ENCODE measurements at regions of chr1 and their contacts with region 1.

Region 1: GRCh38 chr1:1906185-1907097 is 8.6 kb upstream of the CALML6 start:
- DNase-seq: peak; percentile 82
- ATAC-seq: peak; percentile 50
- H3K4me3 Mint-ChIP-seq: no peak overlapping the region
- H3K27ac Mint-ChIP-seq: peak overlapping the region; percentile 21
- H3K4me1 Mint-ChIP-seq: peaks cover 15% of the 10 kb centered on the region
- H3K27me3 Mint-ChIP-seq: no peaks in the 10 kb centered on the region

Region 2: GRCh38 chr1:1777950-1778662 is 128.3 kb before region 1 on chr1 and contains the start of gene NADK:
- CTCF ChIA-PET with region 1: interaction called, 27 read pairs
- DNase-seq: peak; percentile 75
- ATAC-seq: peak; percentile 71
- H3K4me3 Mint-ChIP-seq: peak within 1 kb of the TSS; percentile 79
- H3K27ac Mint-ChIP-seq: peak within 1 kb of the TSS; percentile 98
- H3K4me1 Mint-ChIP-seq: peaks cover 67% of the 10 kb centered on the region
- H3K27me3 Mint-ChIP-seq: no peaks in the 10 kb centered on the region
- total RNA-seq, gene NADK: 97.9 to 100 TPM

Region 3: DNA sequence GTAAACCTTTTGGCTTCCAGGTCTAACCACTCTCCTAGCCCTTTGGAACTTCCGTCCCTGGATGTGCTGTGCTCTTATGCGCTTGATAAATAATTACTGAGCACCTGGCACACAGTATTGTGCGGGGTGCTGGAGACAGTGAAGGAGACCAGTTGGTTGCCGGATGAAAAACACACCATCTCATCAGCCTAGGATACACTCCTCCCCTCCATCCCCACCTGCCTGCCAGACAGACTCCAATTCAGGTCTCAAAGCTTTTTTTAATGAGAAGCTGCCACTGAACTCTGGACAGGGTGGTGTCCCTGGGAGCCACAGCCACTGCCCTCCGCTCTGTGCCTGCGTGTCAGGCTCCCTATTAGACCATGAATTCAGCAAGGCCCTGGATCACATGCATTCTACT is 24.7 kb before region 1 on chr1:
- CTCF ChIA-PET with region 1: interaction called, 10 read pairs
- DNase-seq: no peak
- ATAC-seq: no peak
- H3K4me3 Mint-ChIP-seq: no peak overlapping the region
- H3K27ac Mint-ChIP-seq: peak overlapping the region; percentile 63
- H3K4me1 Mint-ChIP-seq: peaks cover 46% of the 10 kb centered on the region
- H3K27me3 Mint-ChIP-seq: no peaks in the 10 kb centered on the region

Region 4: DNA sequence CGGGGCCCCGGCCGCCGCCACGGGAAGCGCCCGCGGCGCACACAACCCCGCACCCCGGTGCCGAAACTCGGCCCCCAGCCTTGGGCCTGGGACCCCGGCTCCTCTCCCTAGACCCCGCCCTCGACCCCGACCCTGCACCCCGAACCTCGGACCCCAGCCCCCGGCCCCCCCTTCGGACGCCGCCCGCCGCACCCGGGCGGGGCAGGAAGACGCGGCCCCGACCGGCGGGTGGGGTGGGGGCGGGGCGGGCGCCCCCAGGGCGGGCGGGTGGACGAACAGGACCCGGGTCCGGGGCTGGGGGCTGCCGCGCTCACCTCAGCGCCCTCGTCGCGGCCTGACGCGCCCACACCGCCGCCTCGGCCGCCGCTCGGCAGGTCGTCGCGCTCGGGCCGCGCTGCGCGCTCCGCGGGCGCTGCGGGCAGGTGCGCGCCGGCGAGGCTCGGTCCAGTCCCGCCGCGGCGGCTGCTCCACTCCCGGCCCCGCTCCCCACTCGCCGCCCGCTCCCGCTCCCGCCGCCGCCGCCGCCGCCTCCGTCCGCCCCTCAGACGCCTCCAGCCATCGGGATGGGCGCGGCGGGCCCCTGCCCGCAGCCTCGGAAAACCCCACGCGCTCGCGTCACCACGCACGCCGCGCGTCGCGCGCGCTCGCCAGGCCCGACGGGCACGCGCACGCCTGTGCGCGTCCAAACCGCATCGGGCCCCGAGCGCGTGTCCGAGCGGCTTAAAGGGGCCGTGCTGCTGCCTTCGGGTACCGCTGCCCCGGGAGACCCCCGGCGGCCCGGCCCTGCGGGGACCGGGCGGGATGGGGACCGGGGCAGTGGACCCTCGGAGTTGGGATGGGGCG is 15.7 kb before region 1 on chr1 and contains the start of gene GNB1:
- CTCF ChIA-PET with region 1: interaction called, 96 read pairs
- DNase-seq: peak; percentile 87
- ATAC-seq: peak; percentile 58
- H3K4me3 Mint-ChIP-seq: peak within 1 kb of the TSS; percentile 92
- H3K27ac Mint-ChIP-seq: peak within 1 kb of the TSS; percentile 82
- H3K4me1 Mint-ChIP-seq: peaks cover 54% of the 10 kb centered on the region
- H3K27me3 Mint-ChIP-seq: no peaks in the 10 kb centered on the region
- total RNA-seq, gene GNB1: 426 to 473 TPM

Region 5: GRCh38 chr1:1919304-1920056 is 13.0 kb after region 1 on chr1:
- CTCF ChIA-PET with region 1: interaction called, 12 read pairs
- DNase-seq: peak; percentile 100
- ATAC-seq: peak; percentile 90
- H3K4me3 Mint-ChIP-seq: peak overlapping the region; percentile 63
- H3K27ac Mint-ChIP-seq: peak overlapping the region; percentile 24
- H3K4me1 Mint-ChIP-seq: peaks cover 6% of the 10 kb centered on the region
- H3K27me3 Mint-ChIP-seq: peaks cover 9% of the 10 kb centered on the region